ENCODE measurements at regions of chr15 and their contacts with region 1.

Region 1: DNA sequence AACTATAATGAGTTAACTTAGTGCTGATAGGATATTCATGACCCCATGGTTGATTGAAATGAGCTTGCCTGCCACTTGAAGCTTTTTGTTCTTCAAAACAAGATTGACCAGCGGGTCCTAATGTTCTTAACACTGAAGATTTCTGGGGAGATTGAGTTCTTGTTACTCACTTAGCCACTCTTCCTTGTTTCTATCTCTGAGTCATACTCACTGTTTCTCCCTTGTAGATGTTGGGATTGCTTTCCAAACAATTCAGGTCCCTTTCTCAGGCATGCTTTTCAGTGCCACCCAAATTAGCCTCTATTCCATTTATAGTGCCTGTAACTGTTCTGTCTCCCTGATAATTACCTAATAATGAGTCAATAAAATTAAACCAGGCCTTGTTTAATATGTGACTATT is 517.0 kb downstream of the SQOR start:
- DNase-seq: no peak

Region 2: GRCh38 chr15:47412136-47412535 is 1260.3 kb after region 1 on chr15:
- intact Hi-C with region 1: loop called in 1 of 2 experiments (anchors 5 kb)
- DNase-seq: no peak

Measured in posterior vena cava (tissue), 2 donors.